Calu3 (cell line): ENCODE measurements at regions of chr2 and their contacts with region 1.

Region 1: GRCh38 chr2:118772487-118773200 is 74.8 kb downstream of the EN1 start:
- DNase-seq: no peak
- H3K4me3 Mint-ChIP-seq: no peak overlapping the region
- H3K27ac Mint-ChIP-seq: no peak overlapping the region
- H3K4me1 Mint-ChIP-seq: peaks cover 9% of the 10 kb centered on the region
- H3K27me3 Mint-ChIP-seq: peaks cover 40% of the 10 kb centered on the region
- CTCF ChIP-seq: no peak

Region 2: DNA sequence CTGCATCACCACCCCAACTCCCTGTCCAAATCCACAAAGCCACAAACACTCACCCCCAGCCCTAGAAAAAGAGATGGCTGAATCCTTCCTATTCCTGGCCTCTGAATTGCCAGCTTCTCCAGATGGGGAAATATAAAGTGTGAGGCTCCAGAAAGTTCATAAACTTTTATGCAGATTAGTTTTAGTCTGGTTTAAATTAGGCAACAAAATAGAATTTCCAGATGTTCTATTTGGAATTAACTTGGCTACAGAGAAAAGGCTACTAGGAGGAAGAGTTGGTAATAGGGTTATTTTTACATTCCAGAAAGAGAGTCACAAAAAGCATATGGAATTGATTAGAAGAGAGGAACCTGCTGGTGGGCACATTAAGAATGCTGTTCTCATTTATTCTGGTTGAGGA is 18.8 kb after region 1 on chr2:
- CTCF ChIA-PET with region 1: no interaction called
- intact Hi-C with region 1: no loop called
- DNase-seq: no peak
- H3K4me3 Mint-ChIP-seq: no peak overlapping the region
- H3K27ac Mint-ChIP-seq: no peak overlapping the region
- H3K4me1 Mint-ChIP-seq: no peaks in the 10 kb centered on the region
- H3K27me3 Mint-ChIP-seq: peaks cover 74% of the 10 kb centered on the region
- CTCF ChIP-seq: no peak

Region 3: GRCh38 chr2:118830121-118830520 is 57.5 kb after region 1 on chr2:
- CTCF ChIA-PET with region 1: interaction called, 10 read pairs
- intact Hi-C with region 1: no loop called
- DNase-seq: no peak
- H3K4me3 Mint-ChIP-seq: no peak overlapping the region
- H3K27ac Mint-ChIP-seq: no peak overlapping the region
- H3K4me1 Mint-ChIP-seq: no peaks in the 10 kb centered on the region
- H3K27me3 Mint-ChIP-seq: peaks cover 13% of the 10 kb centered on the region
- CTCF ChIP-seq: no peak